Endothelial cell of umbilical vein (primary cell): ENCODE measurements at regions of chr16 and their contacts with region 1.

Region 1: GRCh38 chr16:80924372-80924978 is 82.2 kb downstream of the CMC2 start:
- DNase-seq: peak; percentile 80
- H3K4me3 ChIP-seq: no peak overlapping the region
- H3K27ac ChIP-seq: no peak overlapping the region
- H3K4me1 ChIP-seq: no peaks in the 10 kb centered on the region
- H3K27me3 ChIP-seq: no peaks in the 10 kb centered on the region
- CTCF ChIP-seq: peak; percentile 88 to 95
- POLR2A ChIP-seq: no peak

Region 2: GRCh38 chr16:80693553-80693952 is 230.9 kb before region 1 on chr16:
- CTCF ChIA-PET with region 1: no interaction called
- POLR2A ChIA-PET with region 1: interaction called, 11 read pairs
- dilution Hi-C with region 1: no loop called
- intact Hi-C with region 1: no loop called
- DNase-seq: no peak
- H3K4me3 ChIP-seq: no peak overlapping the region
- H3K27ac ChIP-seq: no peak overlapping the region
- H3K4me1 ChIP-seq: no peaks in the 10 kb centered on the region
- H3K27me3 ChIP-seq: no peaks in the 10 kb centered on the region
- CTCF ChIP-seq: no peak
- POLR2A ChIP-seq: no peak

Region 3: DNA sequence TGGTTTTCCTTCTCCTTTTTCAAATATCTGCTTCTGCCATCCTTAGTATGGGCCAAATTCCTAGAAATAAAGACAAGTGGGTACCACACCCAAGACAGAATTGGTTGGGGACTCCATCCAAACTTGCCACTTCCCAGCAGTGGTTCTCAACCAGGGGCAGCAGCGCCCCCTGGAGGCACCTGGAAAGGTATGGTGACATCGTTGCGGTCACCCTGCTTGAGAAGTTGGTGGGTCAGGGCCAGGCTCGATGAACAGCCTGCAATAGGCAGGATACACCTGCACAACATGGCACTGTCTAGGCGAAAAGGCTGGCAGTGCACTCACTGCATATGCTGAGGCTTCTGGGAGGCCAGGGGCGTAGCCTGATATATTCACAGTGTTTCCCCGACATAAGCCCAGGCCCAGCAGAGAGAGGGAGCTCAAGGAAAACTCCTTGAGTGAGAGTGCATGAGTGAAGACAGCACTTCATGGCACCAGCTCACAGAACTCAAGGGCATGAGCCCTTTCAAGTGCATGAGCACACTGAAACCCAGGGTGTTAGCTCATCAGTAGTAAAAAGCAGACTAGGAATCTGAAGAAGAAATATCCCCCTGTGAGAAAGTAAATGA is 24.5 kb after region 1 on chr16:
- CTCF ChIA-PET with region 1: interaction called, 218 read pairs
- POLR2A ChIA-PET with region 1: no interaction called
- dilution Hi-C with region 1: no loop called
- intact Hi-C with region 1: loop called (anchors 1 kb)
- DNase-seq: peak; percentile 73
- H3K4me3 ChIP-seq: no peak overlapping the region
- H3K27ac ChIP-seq: peak overlapping the region; percentile 54
- H3K4me1 ChIP-seq: peaks cover 8% of the 10 kb centered on the region
- H3K27me3 ChIP-seq: no peaks in the 10 kb centered on the region
- CTCF ChIP-seq: peak; percentile 82 to 83
- POLR2A ChIP-seq: no peak

Region 4: GRCh38 chr16:80997139-80997798 is 72.8 kb after region 1 on chr16:
- CTCF ChIA-PET with region 1: interaction called, 10 read pairs
- POLR2A ChIA-PET with region 1: no interaction called
- dilution Hi-C with region 1: no loop called
- intact Hi-C with region 1: no loop called
- DNase-seq: peak; percentile 54
- H3K4me3 ChIP-seq: peak overlapping the region; percentile 10 to 51 (median 10)
- H3K27ac ChIP-seq: peak overlapping the region; percentile 51
- H3K4me1 ChIP-seq: peaks cover 31% of the 10 kb centered on the region
- H3K27me3 ChIP-seq: no peaks in the 10 kb centered on the region
- CTCF ChIP-seq: no peak
- POLR2A ChIP-seq: no peak

Region 5: GRCh38 chr16:81006814-81007696 is 82.6 kb after region 1 on chr16 and contains the starts of genes CENPN and CMC2:
- CTCF ChIA-PET with region 1: interaction called, 13 read pairs
- POLR2A ChIA-PET with region 1: no interaction called
- dilution Hi-C with region 1: no loop called
- intact Hi-C with region 1: loop called (anchors 1 kb)
- DNase-seq: peak; percentile 99
- H3K4me3 ChIP-seq: peak within 1 kb of the TSS; percentile 72 to 87 (median 83)
- H3K27ac ChIP-seq: peak within 1 kb of the TSS; percentile 80
- H3K4me1 ChIP-seq: peaks cover 19% of the 10 kb centered on the region
- H3K27me3 ChIP-seq: no peaks in the 10 kb centered on the region
- CTCF ChIP-seq: peak in 1 of 2 donors; percentile 1
- POLR2A ChIP-seq: peak; percentile 84
- total RNA-seq, gene CENPN: 52.4 and 53.4 TPM in 2 replicates
- total RNA-seq, gene CMC2: 96.6 and 97.8 TPM in 2 replicates

Region 6: GRCh38 chr16:81737885-81738786 is 813.7 kb after region 1 on chr16:
- CTCF ChIA-PET with region 1: interaction called, 3 read pairs
- POLR2A ChIA-PET with region 1: no interaction called
- dilution Hi-C with region 1: no loop called
- intact Hi-C with region 1: loop called (anchors 10 kb)
- DNase-seq: peak; percentile 81
- H3K4me3 ChIP-seq: peak overlapping the region in 1 of 3 experiments; percentile 40
- H3K27ac ChIP-seq: no peak overlapping the region
- H3K4me1 ChIP-seq: peaks cover 4% of the 10 kb centered on the region
- H3K27me3 ChIP-seq: no peaks in the 10 kb centered on the region
- CTCF ChIP-seq: peak; percentile 77 to 83
- POLR2A ChIP-seq: no peak